ENCODE measurements at regions of chr19 and their contacts with region 1.

Region 1: GRCh38 chr19:41410336-41411054 is 12.9 kb downstream of the BCKDHA start:
- DNase-seq: no peak
- H3K4me3 ChIP-seq: no peak overlapping the region
- H3K27ac ChIP-seq: no peak overlapping the region
- H3K4me1 ChIP-seq: no peaks in the 10 kb centered on the region
- H3K27me3 ChIP-seq: no peaks in the 10 kb centered on the region
- CTCF ChIP-seq: no peak

Region 2: GRCh38 chr19:41548954-41549688 is 138.6 kb after region 1 on chr19:
- CTCF ChIA-PET with region 1: interaction called, 12 read pairs
- POLR2A ChIA-PET with region 1: no interaction called
- intact Hi-C with region 1: no loop called
- DNase-seq: peak; percentile 91
- H3K4me3 ChIP-seq: peak overlapping the region; percentile 18
- H3K27ac ChIP-seq: peak overlapping the region; percentile 56
- H3K4me1 ChIP-seq: peaks cover 23% of the 10 kb centered on the region
- H3K27me3 ChIP-seq: no peaks in the 10 kb centered on the region
- CTCF ChIP-seq: no peak

Measured in A673 (cell line).